MCF 10A (cell line): ENCODE measurements at regions of chr10 and their contacts with region 1.

Region 1: GRCh38 chr10:17607603-17608332 is 9.4 kb downstream of the HACD1 start:
- DNase-seq: peak; percentile 70
- H3K4me3 Mint-ChIP-seq: no peak overlapping the region
- H3K27ac Mint-ChIP-seq: no peak overlapping the region
- H3K4me1 Mint-ChIP-seq: peaks cover 6% of the 10 kb centered on the region
- H3K27me3 Mint-ChIP-seq: no peaks in the 10 kb centered on the region
- CTCF ChIP-seq: peak; percentile 66

Region 2: GRCh38 chr10:17742918-17743317 is 135.2 kb after region 1 on chr10:
- CTCF ChIA-PET with region 1: interaction called, 39 read pairs
- POLR2A ChIA-PET with region 1: no interaction called
- intact Hi-C with region 1: loop called (anchors 1 kb)
- DNase-seq: peak; percentile 62
- H3K4me3 Mint-ChIP-seq: no peak overlapping the region
- H3K27ac Mint-ChIP-seq: no peak overlapping the region
- H3K4me1 Mint-ChIP-seq: peaks cover 5% of the 10 kb centered on the region
- H3K27me3 Mint-ChIP-seq: no peaks in the 10 kb centered on the region
- CTCF ChIP-seq: peak; percentile 80

Region 3: DNA sequence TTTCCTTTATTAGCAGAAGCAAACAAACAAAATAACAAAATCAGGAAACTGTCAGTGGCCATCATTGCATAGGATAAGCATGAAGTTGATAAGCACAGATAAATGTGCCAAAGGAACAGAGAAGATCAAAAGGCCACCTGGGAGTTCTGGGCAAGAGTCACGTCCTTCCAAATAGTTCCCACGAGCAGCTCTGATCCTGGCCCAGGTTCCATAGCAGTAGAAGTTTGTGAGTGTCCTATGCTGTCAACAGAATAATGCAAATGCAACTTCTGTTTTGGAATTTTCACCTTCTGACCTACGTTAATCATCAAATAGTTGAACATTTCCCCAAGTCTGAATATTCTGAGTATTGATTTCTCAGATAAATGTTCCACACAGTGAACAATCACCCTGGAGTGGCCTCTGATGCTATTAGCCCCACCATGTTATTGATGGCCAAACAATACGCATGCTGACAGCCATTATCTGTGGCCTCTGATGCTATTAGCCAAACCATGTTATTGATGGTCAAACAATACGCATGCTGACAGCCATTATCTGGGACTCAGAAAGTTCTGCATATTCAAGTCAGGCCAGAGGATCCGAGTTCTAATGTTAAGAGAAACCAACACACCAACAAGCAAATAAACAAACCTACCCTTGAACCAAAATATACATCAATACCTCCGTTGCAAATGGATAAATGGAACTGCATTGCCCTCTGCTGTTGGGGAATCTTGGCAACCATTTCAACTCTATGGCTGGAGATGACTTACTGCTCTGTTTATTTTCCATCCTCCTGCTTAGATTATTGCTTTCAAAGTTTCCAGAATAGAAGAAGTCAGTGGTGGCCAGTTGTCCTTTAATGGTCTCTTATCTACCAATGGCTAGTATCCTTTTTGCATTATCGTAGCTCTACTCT is 264.7 kb after region 1 on chr10:
- CTCF ChIA-PET with region 1: interaction called, 6 read pairs
- POLR2A ChIA-PET with region 1: no interaction called
- intact Hi-C with region 1: loop called (anchors 1 kb)
- DNase-seq: peak; percentile 45
- H3K4me3 Mint-ChIP-seq: no peak overlapping the region
- H3K27ac Mint-ChIP-seq: no peak overlapping the region
- H3K4me1 Mint-ChIP-seq: peaks cover under 1% of the 10 kb centered on the region
- H3K27me3 Mint-ChIP-seq: no peaks in the 10 kb centered on the region
- CTCF ChIP-seq: peak; percentile 31

Region 4: DNA sequence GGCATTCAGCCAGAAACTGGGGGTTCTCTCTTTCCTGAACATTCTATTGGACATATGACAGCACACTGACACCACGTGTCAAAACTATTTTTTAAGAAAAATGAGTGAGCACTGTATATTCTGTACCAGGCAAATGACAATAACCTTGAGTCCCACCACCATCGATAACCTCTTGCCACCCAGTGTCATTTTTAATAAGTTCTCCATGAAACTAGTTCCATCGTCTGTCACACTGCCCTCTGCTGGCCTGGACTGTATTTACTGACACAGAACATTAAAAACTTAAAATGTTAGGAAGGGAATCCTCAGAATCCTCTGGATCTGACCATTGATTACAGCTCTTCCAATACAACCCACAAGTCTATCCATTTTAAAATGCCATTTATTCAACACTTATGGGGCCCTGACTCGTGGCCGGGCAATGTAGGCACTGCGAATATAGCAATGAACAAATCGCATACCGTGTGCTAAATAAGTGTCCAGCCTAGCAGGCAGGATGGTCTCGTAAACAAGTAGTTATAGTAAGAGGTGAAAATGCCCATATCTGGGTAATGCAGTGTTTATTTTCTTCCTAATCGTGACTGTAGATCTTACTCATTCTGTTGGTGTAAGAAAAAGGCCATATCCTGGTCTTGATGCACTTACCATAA is 496.6 kb after region 1 on chr10:
- CTCF ChIA-PET with region 1: no interaction called
- POLR2A ChIA-PET with region 1: no interaction called
- intact Hi-C with region 1: loop called (anchors 1 kb)
- DNase-seq: peak; percentile 65
- H3K4me3 Mint-ChIP-seq: no peak overlapping the region
- H3K27ac Mint-ChIP-seq: no peak overlapping the region
- H3K4me1 Mint-ChIP-seq: peaks cover 6% of the 10 kb centered on the region
- H3K27me3 Mint-ChIP-seq: no peaks in the 10 kb centered on the region
- CTCF ChIP-seq: peak; percentile 69

Region 5: GRCh38 chr10:18238870-18239485 is 631.2 kb after region 1 on chr10:
- CTCF ChIA-PET with region 1: interaction called, 4 read pairs
- POLR2A ChIA-PET with region 1: no interaction called
- intact Hi-C with region 1: loop called (anchors 5 kb)
- DNase-seq: peak; percentile 57
- H3K4me3 Mint-ChIP-seq: no peak overlapping the region
- H3K27ac Mint-ChIP-seq: no peak overlapping the region
- H3K4me1 Mint-ChIP-seq: peaks cover 18% of the 10 kb centered on the region
- H3K27me3 Mint-ChIP-seq: no peaks in the 10 kb centered on the region
- CTCF ChIP-seq: peak; percentile 59

Region 6: GRCh38 chr10:18312374-18313139 is 704.8 kb after region 1 on chr10:
- CTCF ChIA-PET with region 1: no interaction called
- POLR2A ChIA-PET with region 1: no interaction called
- intact Hi-C with region 1: loop called (anchors 5 kb)
- DNase-seq: peak; percentile 43
- H3K4me3 Mint-ChIP-seq: no peak overlapping the region
- H3K27ac Mint-ChIP-seq: no peak overlapping the region
- H3K4me1 Mint-ChIP-seq: peaks cover 6% of the 10 kb centered on the region
- H3K27me3 Mint-ChIP-seq: no peaks in the 10 kb centered on the region
- CTCF ChIP-seq: peak; percentile 55